ENCODE measurements at regions of chr7 and their contacts with region 1.

Region 1: GRCh38 chr7:71723859-71724258 is 591.9 kb downstream of the GALNT17 start:
- DNase-seq: no peak

Region 2: DNA sequence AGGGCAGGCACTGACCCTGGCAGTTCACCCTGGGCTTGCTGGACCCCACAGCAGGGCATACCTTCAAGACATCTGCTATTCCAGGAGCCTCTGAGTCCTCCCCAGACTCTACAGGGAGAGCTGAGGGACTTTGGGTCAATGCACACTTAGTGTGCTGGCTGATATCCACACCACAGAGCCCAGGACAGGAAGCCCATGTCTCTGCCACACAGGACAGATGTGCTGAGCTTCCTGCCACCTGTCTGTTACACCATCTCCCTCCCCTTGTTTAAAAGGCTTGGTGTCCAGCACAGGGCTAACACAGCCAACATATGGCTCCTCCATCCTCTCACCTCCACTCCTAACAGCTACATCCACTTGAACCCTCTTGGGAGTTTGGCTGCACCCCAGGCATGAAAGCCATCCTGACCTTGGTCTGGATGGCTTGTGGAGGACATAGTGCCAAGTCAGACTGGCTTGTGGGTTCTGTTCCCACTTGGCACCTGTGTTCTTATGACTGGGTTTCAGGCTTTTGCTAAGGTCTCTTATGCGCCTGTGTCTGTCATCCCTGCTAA is 62.1 kb before region 1 on chr7:
- intact Hi-C with region 1: loop called (anchors 10 kb)
- DNase-seq: peak; percentile 74

Region 3: GRCh38 chr7:71829515-71829914 is 105.7 kb after region 1 on chr7:
- intact Hi-C with region 1: no loop called
- DNase-seq: no peak

Region 4: DNA sequence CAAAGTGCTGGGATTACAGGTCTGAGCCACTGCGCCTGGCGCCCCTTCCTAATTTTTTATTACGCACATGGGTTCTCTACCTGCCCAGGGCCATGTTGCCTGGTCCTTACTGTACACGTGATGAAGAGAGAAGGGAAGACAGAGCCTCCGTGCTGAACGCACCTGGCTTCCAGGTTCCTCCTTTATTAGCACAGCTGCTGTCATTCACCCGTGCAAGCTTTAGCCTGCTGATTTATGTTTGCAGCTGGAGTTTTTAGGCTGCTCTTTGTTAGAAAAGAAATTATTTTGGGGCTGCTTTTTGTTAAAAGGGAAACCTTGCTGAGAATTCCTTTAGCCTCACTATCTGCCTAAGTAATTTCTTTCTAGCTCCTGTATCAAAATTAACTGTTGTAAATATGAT is 271.3 kb after region 1 on chr7:
- intact Hi-C with region 1: no loop called
- DNase-seq: no peak

Measured in cardiac septum (tissue), 1 donor.